BJ (cell line): ENCODE measurements at regions of chr19 and their contacts with region 1.

Region 1: DNA sequence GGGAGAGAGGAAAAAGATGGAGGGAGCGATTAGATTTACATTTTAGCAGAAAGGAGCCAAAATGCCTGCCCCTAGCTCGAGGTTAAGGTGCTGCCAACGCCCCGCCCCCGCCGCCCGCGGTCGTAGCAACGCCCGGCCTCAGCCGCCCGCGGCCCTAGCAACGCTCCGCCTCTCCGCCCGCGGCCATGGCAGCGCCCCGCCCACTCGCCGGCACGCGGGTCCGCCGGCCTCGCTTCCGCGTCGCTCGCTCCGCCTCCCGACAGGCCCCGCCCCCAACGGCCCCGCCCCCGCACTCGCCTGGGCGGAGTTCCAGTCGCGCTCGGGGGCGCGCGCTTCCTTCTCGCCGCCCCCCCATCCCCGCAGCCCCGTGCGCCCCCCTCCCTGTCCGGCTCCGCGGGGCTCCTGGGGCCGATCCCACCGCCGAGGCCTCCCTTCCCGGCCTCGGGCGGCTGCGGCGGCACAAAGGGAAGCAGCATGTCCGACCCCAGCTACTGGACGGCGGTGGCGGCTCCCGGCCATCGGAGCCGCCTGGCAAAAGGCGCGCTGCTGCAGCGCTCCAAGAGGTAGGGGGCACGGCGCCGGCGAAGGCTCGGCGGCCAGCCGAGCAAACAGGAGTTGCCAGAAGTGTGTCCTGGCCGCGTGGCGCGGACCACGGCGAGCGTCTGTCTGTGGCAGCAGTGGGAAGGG is 20.3 kb downstream of the MAST3 start:
- DNase-seq: no peak
- H3K4me3 ChIP-seq: peak overlapping the region; percentile 60
- H3K27me3 ChIP-seq: no peaks in the 10 kb centered on the region
- CTCF ChIP-seq: 0 out of 2 replicates have a peak, but pooled peaks have one; percentile 8

Region 2: DNA sequence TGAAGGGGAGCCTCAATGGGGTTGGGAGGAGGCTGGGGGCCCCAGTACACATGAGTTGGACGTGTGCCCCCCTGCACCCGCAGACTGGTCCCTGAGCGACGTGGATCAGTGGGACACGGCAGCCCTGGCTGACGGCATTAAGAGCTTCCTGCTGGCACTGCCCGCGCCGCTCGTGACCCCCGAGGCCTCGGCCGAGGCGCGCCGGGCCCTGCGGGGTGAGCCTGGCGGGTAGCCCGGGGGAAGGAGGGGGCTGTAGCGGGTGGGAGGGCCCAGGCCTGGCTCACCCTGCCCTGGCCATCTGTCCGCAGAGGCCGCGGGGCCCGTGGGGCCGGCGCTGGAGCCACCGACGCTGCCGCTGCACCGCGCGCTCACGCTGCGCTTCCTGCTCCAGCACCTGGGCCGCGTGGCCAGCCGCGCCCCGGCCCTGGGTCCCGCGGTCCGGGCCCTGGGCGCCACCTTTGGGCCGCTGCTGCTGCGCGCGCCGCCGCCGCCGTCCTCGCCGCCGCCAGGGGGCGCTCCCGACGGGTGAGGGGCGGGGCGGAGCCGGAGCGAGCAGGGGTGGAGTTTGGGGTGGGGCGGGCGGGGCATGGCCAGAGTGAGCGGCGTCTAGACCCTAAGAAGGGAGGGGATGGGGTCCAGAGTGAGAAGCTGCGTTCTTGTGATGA is 43.3 kb after region 1 on chr19:
- CTCF ChIA-PET with region 1: interaction called, 10 read pairs
- POLR2A ChIA-PET with region 1: interaction called, 4 read pairs
- DNase-seq: no peak
- H3K4me3 ChIP-seq: 0 out of 2 replicates have a peak overlapping the region, but pooled peaks have one; percentile 15
- H3K27me3 ChIP-seq: no peaks in the 10 kb centered on the region
- CTCF ChIP-seq: peak; percentile 49

Region 3: GRCh38 chr19:18167975-18168645 is 50.3 kb after region 1 on chr19:
- CTCF ChIA-PET with region 1: interaction called, 10 read pairs
- POLR2A ChIA-PET with region 1: interaction called, 4 read pairs
- DNase-seq: no peak
- H3K4me3 ChIP-seq: no peak overlapping the region
- H3K27me3 ChIP-seq: no peaks in the 10 kb centered on the region
- CTCF ChIP-seq: peak; percentile 80